ENCODE measurements at regions of chr6 and their contacts with region 1.

Region 1: GRCh38 chr6:52577022-52577777 is at the start of gene TRAM2:
- DNase-seq: peak; percentile 75
- H3K4me3 ChIP-seq: peak within 1 kb of the TSS; percentile 65 to 85 (median 67)
- H3K27ac ChIP-seq: peak within 1 kb of the TSS; percentile 67
- H3K4me1 ChIP-seq: peaks cover 38% of the 10 kb centered on the region
- H3K27me3 ChIP-seq: no peaks in the 10 kb centered on the region
- CTCF ChIP-seq: no peak
- POLR2A ChIP-seq: peak; percentile 76
- total RNA-seq, gene TRAM2: 85.9 and 98.6 TPM in 2 replicates

Region 2: GRCh38 chr6:52407467-52407866 is 169.7 kb before region 1 on chr6:
- CTCF ChIA-PET with region 1: interaction called, 12 read pairs
- POLR2A ChIA-PET with region 1: no interaction called
- dilution Hi-C with region 1: no loop called
- intact Hi-C with region 1: no loop called
- DNase-seq: peak; percentile 71
- H3K4me3 ChIP-seq: no peak overlapping the region
- H3K27ac ChIP-seq: no peak overlapping the region
- H3K4me1 ChIP-seq: no peaks in the 10 kb centered on the region
- H3K27me3 ChIP-seq: no peaks in the 10 kb centered on the region
- CTCF ChIP-seq: peak; percentile 45 to 58
- POLR2A ChIP-seq: no peak

Region 3: DNA sequence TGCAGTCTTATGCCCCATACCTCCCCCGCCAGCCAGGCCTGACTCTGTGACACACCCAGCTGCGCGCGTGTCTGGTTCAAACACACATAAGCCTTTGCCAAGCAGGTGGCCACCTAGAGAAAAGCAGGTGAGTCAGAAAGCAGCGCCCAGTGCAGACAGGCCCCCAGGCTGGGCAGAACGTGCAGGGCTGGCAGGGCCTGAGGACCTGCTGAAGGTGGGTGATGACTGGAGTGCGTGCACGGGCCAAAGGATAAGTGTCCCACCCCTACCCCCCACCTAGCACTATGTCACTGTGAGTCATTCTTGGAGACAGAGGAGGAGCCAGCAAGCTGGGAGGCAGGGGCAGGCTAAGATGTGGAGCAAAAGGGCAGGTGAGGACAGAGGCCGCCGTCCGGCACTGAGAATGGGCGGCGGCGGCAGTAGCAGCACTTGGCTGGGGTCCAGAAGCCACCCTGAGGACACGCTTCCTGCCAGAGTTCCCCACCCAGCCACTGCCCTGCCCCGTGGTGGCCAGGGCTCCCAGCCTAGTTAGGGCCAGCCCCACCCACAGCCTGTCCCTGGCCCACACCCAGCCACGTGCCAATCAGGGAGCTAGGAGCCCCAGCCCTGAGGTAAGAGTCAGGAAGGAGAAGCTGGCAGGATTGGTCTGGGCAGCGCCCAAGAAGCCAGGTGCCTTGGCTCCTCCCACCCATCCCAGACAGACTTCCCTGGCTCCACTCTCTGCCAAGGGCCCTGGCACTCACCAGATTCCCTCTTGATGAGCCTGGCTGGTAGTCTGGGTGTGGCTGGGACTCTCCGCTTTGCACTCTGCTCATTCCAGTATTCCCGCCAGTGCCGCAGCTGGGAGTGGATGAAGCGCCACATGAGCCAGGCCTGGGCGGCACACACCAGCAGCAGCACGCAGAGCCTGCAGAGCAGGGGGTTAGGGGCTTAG is 73.1 kb before region 1 on chr6:
- CTCF ChIA-PET with region 1: no interaction called
- POLR2A ChIA-PET with region 1: no interaction called
- dilution Hi-C with region 1: no loop called
- intact Hi-C with region 1: loop called (anchors 2 kb)
- DNase-seq: peak; percentile 49
- H3K4me3 ChIP-seq: no peak overlapping the region
- H3K27ac ChIP-seq: peak overlapping the region; percentile 79
- H3K4me1 ChIP-seq: peaks cover 27% of the 10 kb centered on the region
- H3K27me3 ChIP-seq: no peaks in the 10 kb centered on the region
- CTCF ChIP-seq: no peak
- POLR2A ChIP-seq: no peak

Region 4: GRCh38 chr6:52517502-52518278 is 59.5 kb before region 1 on chr6:
- CTCF ChIA-PET with region 1: interaction called, 24 read pairs
- POLR2A ChIA-PET with region 1: no interaction called
- dilution Hi-C with region 1: no loop called
- intact Hi-C with region 1: loop called (anchors 1 kb)
- DNase-seq: peak; percentile 94
- H3K4me3 ChIP-seq: no peak overlapping the region
- H3K27ac ChIP-seq: peak overlapping the region; percentile 97
- H3K4me1 ChIP-seq: peaks cover 69% of the 10 kb centered on the region
- H3K27me3 ChIP-seq: no peaks in the 10 kb centered on the region
- CTCF ChIP-seq: no peak
- POLR2A ChIP-seq: peak; percentile 27

Region 5: DNA sequence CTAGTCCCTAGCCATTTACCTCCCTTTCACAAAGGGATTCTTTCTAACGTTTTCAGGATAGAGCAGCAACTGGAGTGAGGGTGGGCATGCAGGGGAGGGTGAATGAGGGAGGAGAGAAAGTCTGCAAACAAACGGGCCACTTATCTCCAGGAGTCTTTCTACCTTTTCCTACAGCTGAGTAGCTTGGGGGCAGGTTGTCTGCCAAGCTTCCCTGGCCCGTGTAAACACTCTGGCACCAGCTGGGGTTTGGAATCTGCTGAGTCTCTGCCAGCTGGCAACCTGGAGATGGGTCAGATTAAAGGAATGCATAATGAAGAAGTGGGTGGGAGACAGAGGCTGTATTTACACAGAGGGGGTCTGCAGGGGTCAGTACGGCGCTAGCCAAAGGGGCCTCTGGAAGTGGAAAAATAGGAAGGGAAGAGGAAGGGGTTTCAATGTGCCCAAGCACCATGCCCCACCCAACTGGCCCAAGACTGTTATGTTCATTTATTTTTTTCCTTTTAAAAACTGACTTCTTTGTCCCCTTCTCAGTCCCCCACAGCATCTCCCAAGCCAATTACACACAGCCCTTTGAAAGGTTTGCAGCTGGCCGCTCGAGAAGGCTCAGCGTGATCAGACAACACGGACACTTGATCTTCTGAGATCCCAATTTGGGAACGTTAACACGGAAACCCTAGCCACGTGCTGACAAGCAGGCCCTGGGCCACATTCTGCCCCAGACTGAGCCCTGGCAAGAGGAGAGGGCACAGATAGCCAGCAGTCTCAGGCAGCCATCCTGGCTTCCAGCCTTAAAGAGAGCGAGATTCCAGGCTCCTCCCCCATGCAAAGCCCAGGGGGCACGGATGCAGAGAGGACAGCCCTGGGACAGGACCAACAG is 25.6 kb before region 1 on chr6:
- CTCF ChIA-PET with region 1: interaction called, 10 read pairs
- POLR2A ChIA-PET with region 1: interaction called, 4 read pairs
- dilution Hi-C with region 1: no loop called
- intact Hi-C with region 1: loop called (anchors 1 kb)
- DNase-seq: peak; percentile 94
- H3K4me3 ChIP-seq: no peak overlapping the region
- H3K27ac ChIP-seq: peak overlapping the region; percentile 82
- H3K4me1 ChIP-seq: peaks cover 60% of the 10 kb centered on the region
- H3K27me3 ChIP-seq: no peaks in the 10 kb centered on the region
- CTCF ChIP-seq: no peak
- POLR2A ChIP-seq: no peak

Region 6: GRCh38 chr6:52647199-52647598 is 70.0 kb after region 1 on chr6:
- CTCF ChIA-PET with region 1: interaction called, 21 read pairs
- POLR2A ChIA-PET with region 1: no interaction called
- dilution Hi-C with region 1: no loop called
- intact Hi-C with region 1: no loop called
- DNase-seq: no peak
- H3K4me3 ChIP-seq: no peak overlapping the region
- H3K27ac ChIP-seq: no peak overlapping the region
- H3K4me1 ChIP-seq: no peaks in the 10 kb centered on the region
- H3K27me3 ChIP-seq: peaks cover 0 to 2% of the 10 kb centered on the region in 2 experiments
- CTCF ChIP-seq: no peak
- POLR2A ChIP-seq: no peak